PC-3 (cell line): ENCODE measurements at regions of chr19 and their contacts with region 1.

Region 1: GRCh38 chr19:8459520-8460259 is 14.9 kb downstream of the HNRNPM start:
- DNase-seq: peak; percentile 84
- ATAC-seq: peak; percentile 88
- H3K4me3 ChIP-seq: peak overlapping the region; percentile 9
- H3K27ac ChIP-seq: peak overlapping the region; percentile 7
- H3K4me1 ChIP-seq: peaks cover 43% of the 10 kb centered on the region
- H3K27me3 ChIP-seq: no peaks in the 10 kb centered on the region
- CTCF ChIP-seq: no peak

Region 2: DNA sequence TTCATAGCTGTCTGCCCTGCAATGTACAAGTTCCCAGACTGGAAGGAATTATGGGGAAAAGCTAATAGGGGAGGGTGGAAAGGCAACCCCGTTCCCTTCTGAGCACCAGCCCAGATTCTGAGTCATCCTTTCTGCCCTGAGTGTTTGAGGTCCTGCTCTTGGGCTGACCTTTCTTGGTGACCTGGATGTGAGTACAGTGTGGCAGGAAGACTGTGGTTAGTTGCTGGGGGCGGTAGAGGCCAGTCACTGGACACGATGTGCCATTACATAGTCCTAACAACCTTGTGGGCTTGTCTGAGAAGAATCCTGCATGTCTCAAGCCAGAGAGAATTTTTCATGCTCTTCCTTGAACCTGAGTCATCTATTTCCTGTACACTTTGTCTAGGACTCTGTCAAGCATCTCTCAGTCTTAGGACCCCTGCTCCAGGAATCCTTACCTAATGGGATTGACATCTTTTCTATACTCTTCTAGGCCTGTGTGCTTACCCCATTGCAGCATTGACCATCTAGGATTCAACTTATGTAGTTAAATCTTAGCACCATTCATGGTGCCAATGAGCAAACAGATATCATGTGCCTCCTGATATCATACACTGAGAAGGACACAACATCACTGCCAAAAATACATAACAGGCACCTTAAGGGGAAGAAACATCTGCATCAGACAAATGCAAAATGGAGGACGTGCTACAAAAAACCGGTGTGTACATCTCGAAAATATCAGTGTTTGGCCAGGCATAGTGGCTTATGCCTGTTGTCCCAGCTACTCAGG is 103.9 kb before region 1 on chr19:
- CTCF ChIA-PET with region 1: no interaction called
- POLR2A ChIA-PET with region 1: no interaction called
- intact Hi-C with region 1: loop called (anchors 5 kb)
- DNase-seq: peak; percentile 97
- ATAC-seq: peak; percentile 93
- H3K4me3 ChIP-seq: no peak overlapping the region
- H3K27ac ChIP-seq: peak overlapping the region; percentile 50
- H3K4me1 ChIP-seq: peaks cover 21% of the 10 kb centered on the region
- H3K27me3 ChIP-seq: no peaks in the 10 kb centered on the region
- CTCF ChIP-seq: 0 out of 2 replicates have a peak, but pooled peaks have one; percentile 19

Region 3: GRCh38 chr19:8389891-8390616 is 69.6 kb before region 1 on chr19 and contains the start of gene RAB11B:
- CTCF ChIA-PET with region 1: no interaction called
- POLR2A ChIA-PET with region 1: interaction called, 3 read pairs
- intact Hi-C with region 1: loop called (anchors 2 kb)
- DNase-seq: peak; percentile 100
- ATAC-seq: peak; percentile 93
- H3K4me3 ChIP-seq: peak within 1 kb of the TSS; percentile 89
- H3K27ac ChIP-seq: peak within 1 kb of the TSS; percentile 94
- H3K4me1 ChIP-seq: peaks cover 39% of the 10 kb centered on the region
- H3K27me3 ChIP-seq: no peaks in the 10 kb centered on the region
- CTCF ChIP-seq: no peak
- total RNA-seq, gene RAB11B: 29.7 and 43.6 TPM in 2 replicates

Region 4: GRCh38 chr19:8401981-8402411 is 57.7 kb before region 1 on chr19:
- CTCF ChIA-PET with region 1: no interaction called
- POLR2A ChIA-PET with region 1: no interaction called
- intact Hi-C with region 1: no loop called
- DNase-seq: no peak
- ATAC-seq: no peak
- H3K4me3 ChIP-seq: no peak overlapping the region
- H3K27ac ChIP-seq: no peak overlapping the region
- H3K4me1 ChIP-seq: no peaks in the 10 kb centered on the region
- H3K27me3 ChIP-seq: no peaks in the 10 kb centered on the region
- CTCF ChIP-seq: no peak

Region 5: GRCh38 chr19:8438236-8438635 is 21.5 kb before region 1 on chr19:
- CTCF ChIA-PET with region 1: no interaction called
- POLR2A ChIA-PET with region 1: no interaction called
- intact Hi-C with region 1: loop called (anchors 1 kb)
- DNase-seq: no peak
- ATAC-seq: no peak
- H3K4me3 ChIP-seq: no peak overlapping the region
- H3K27ac ChIP-seq: no peak overlapping the region
- H3K4me1 ChIP-seq: no peaks in the 10 kb centered on the region
- H3K27me3 ChIP-seq: no peaks in the 10 kb centered on the region
- CTCF ChIP-seq: no peak

Region 6: GRCh38 chr19:8484331-8484894 is 24.7 kb after region 1 on chr19:
- CTCF ChIA-PET with region 1: no interaction called
- POLR2A ChIA-PET with region 1: no interaction called
- intact Hi-C with region 1: no loop called
- DNase-seq: no peak
- ATAC-seq: no peak
- H3K4me3 ChIP-seq: no peak overlapping the region
- H3K27ac ChIP-seq: no peak overlapping the region
- H3K4me1 ChIP-seq: no peaks in the 10 kb centered on the region
- H3K27me3 ChIP-seq: no peaks in the 10 kb centered on the region
- CTCF ChIP-seq: no peak

Region 7: GRCh38 chr19:8505680-8506401 is 46.2 kb after region 1 on chr19:
- CTCF ChIA-PET with region 1: no interaction called
- POLR2A ChIA-PET with region 1: no interaction called
- intact Hi-C with region 1: loop called (anchors 5 kb)
- DNase-seq: peak; percentile 87
- ATAC-seq: peak; percentile 90
- H3K4me3 ChIP-seq: peak overlapping the region; percentile 76
- H3K27ac ChIP-seq: peak overlapping the region; percentile 1; the same call in 1 of the 2 replicates
- H3K4me1 ChIP-seq: no peaks in the 10 kb centered on the region
- H3K27me3 ChIP-seq: no peaks in the 10 kb centered on the region
- CTCF ChIP-seq: peak; percentile 99

Region 8: DNA sequence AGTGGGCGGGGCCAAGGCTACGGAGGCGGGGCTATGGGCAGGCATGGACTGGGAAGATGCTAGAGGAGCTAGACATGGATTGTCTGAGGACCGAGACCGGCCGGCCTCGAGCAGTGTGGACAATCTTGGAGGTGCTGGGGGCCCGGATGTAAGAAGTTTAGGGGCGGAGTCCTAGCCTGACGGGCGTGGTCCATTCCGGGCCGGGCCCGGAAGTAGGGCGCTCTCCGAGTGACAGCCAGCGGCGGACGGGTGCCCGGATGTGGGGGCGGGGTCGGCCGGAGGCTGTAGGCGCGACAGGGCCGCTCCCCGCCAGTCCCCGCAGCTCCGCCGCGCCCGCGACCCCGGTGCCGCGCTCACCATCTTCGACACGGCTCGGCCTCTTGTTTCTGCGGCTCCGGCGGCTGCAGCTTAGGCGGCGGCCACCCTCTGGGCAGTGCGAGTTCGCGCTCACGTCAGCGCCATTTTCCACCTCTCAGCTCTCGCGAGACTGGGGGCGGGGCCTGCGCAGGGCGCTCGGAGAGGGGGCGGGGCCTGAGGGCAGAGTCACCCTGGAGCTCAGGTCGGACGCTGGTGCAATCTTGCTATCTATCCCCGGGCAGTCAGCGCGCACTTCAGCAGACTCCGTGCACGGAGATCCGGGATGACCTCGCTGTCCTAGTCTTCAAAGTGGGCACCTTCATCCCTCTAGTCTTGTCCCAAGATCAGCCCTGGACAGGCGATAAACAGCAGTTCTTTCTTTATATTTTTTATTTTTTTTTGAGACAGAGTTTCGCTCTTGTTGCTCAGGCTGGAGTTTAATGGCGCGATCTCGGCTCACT is 54.2 kb after region 1 on chr19 and contains the start of gene ZNF414:
- CTCF ChIA-PET with region 1: no interaction called
- POLR2A ChIA-PET with region 1: interaction called, 15 read pairs
- intact Hi-C with region 1: loop called (anchors 5 kb)
- DNase-seq: peak; percentile 98
- ATAC-seq: peak; percentile 95
- H3K4me3 ChIP-seq: peak within 1 kb of the TSS; percentile 78
- H3K27ac ChIP-seq: peak within 1 kb of the TSS; percentile 91
- H3K4me1 ChIP-seq: peaks cover 9% of the 10 kb centered on the region
- H3K27me3 ChIP-seq: no peaks in the 10 kb centered on the region
- CTCF ChIP-seq: no peak
- total RNA-seq, gene ZNF414: 4.6 and 4.7 TPM in 2 replicates

Region 9: DNA sequence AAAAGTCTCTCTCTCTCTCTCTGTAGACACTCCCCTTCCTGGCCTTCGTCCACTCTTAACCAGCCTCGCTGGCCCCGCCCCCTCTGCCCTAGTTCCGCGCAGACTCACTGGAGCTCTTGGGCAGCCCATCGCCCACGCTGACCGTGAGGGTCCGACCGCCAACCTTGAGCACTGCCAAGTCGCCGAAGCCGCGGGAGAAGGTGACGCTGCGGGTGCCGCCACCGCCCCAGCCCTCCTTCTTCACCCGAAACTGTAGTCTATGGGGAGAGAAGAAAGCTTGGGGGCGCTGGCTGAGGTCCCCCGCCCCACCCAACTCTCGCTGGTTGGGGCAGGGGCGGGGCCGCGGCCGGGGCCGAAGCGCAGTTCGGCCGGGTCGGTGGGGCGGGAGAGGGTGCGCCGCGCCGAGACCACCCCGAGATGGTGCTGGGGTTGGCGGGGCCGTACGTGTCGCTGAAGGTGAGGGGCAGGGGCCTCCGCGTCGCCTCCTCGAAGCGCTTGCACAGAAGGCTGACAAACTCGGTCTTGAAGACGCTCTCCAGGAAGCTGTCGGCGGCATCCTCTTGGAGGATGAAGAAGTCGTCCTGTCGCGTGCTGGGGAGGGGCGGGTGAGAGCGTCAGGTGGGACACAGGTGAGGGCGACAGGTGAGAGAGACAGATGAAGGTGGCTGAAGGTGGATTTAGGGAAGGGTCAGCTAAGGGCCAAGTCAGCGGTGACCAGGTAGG is 66.8 kb after region 1 on chr19:
- CTCF ChIA-PET with region 1: no interaction called
- POLR2A ChIA-PET with region 1: no interaction called
- intact Hi-C with region 1: loop called (anchors 5 kb)
- DNase-seq: peak; percentile 95
- ATAC-seq: peak; percentile 67
- H3K4me3 ChIP-seq: peak overlapping the region; percentile 85
- H3K27ac ChIP-seq: peak overlapping the region; percentile 63
- H3K4me1 ChIP-seq: peaks cover 10% of the 10 kb centered on the region
- H3K27me3 ChIP-seq: no peaks in the 10 kb centered on the region
- CTCF ChIP-seq: no peak